ENCODE measurements at regions of chr1 and their contacts with region 1.

Region 1: GRCh38 chr1:205227584-205228006 is at the start of gene TMCC2:
- DNase-seq: peak; percentile 91
- ATAC-seq: peak; percentile 95
- H3K4me3 Mint-ChIP-seq: peak within 1 kb of the TSS; percentile 80
- H3K27ac Mint-ChIP-seq: peak within 1 kb of the TSS; percentile 77
- H3K4me1 Mint-ChIP-seq: peaks cover 45% of the 10 kb centered on the region
- H3K27me3 Mint-ChIP-seq: peaks cover 34% of the 10 kb centered on the region
- total RNA-seq, gene TMCC2: 2.6 to 2.7 TPM

Region 2: GRCh38 chr1:205183676-205184335 is 43.8 kb before region 1 on chr1:
- CTCF ChIA-PET with region 1: interaction called, 14 read pairs
- POLR2A ChIA-PET with region 1: no interaction called
- DNase-seq: peak; percentile 33
- ATAC-seq: peak; percentile 59
- H3K4me3 Mint-ChIP-seq: peak overlapping the region; percentile 32
- H3K27ac Mint-ChIP-seq: peak overlapping the region; percentile 77
- H3K4me1 Mint-ChIP-seq: peaks cover 62% of the 10 kb centered on the region
- H3K27me3 Mint-ChIP-seq: no peaks in the 10 kb centered on the region

Region 3: DNA sequence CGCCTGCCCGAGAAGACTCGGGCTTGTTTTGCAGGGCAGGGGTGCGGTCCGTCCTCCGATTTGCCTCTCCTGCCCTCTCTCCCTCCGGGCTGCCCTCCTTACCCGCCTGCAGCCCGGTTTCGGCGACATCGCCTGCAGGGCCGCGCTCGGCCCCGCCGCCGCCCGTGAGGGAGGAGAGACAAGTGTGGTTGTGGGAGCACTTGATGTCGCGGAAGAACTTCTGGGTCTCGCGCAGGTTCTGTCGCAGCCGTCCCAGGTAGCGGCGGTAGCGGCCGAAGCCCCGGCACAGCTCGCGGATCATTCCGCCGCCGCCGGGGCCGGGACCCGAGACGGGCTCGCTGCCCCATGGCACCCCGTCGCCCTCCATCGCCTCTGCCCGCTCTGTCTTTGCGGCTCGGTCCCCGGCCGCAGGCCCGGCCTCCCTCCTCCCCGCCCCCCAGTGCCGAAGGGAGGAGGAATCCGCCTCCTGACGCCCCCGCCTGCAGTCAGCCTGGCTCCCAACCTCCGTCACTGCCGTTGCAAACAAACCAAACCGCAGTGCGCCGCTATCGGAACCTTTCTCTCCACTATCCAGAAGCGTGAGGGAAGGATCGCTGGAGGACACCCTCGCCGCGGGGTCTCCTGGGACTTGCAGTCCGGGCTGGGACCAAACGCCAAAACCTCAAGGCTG is 16.3 kb before region 1 on chr1 and contains the start of gene DSTYK:
- CTCF ChIA-PET with region 1: interaction called, 15 read pairs
- POLR2A ChIA-PET with region 1: interaction called, 7 read pairs
- DNase-seq: peak; percentile 94
- ATAC-seq: peak; percentile 90
- H3K4me3 Mint-ChIP-seq: peak within 1 kb of the TSS; percentile 95
- H3K27ac Mint-ChIP-seq: peak within 1 kb of the TSS; percentile 93
- H3K4me1 Mint-ChIP-seq: peaks cover 49% of the 10 kb centered on the region
- H3K27me3 Mint-ChIP-seq: no peaks in the 10 kb centered on the region
- total RNA-seq, gene DSTYK: 9.7 to 10.4 TPM

Region 4: DNA sequence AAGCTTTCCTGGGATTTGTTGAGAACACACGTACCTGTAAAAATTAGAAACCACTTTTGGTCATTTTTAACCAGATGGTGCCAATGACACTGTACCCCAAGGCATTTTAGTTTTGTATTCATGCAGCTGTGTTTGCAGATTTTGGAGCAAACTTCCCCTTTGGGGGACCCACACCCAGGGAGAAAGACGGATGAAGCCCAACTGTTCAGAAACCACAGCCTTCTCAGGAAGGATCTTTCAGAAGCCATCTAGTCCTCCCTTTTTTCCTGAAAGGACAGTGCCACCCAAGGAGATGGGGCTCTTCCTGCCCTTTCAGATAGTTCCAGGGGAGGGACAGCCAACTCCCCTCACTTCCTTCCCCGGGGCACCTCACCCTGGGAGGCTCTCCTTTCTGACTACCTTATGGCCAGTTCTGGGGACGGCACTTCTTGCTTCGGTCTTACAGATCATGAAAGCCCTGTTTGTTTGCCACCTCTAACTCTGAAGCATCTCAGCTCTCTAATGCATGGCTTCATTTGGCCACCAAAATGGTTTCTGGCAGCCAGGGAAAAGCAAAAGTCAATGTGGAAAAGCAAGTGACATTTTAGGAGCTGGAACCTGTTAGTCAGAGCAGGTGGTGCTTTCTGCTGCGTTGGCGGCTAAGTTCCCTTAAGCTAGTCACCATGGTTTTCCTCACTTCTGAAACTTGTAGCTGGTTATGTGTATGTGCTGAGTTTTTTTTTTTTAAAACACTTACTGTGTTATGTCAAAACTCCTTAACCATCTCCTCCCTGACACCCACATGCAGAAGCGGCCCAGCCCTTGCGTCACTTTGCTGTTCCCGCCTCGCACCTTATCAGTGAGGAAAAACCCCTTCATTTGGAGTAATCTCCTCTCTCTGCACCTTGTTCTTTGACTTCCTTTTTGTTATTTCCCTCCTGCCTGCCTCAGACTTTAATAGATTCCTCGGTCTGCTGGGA is 10.2 kb after region 1 on chr1:
- CTCF ChIA-PET with region 1: interaction called, 42 read pairs
- POLR2A ChIA-PET with region 1: no interaction called
- DNase-seq: no peak
- ATAC-seq: no peak
- H3K4me3 Mint-ChIP-seq: no peak overlapping the region
- H3K27ac Mint-ChIP-seq: no peak overlapping the region
- H3K4me1 Mint-ChIP-seq: peaks cover 16% of the 10 kb centered on the region
- H3K27me3 Mint-ChIP-seq: peaks cover 2% of the 10 kb centered on the region

Region 5: GRCh38 chr1:205321164-205321958 is 93.8 kb after region 1 on chr1 and contains the start of gene NUAK2:
- CTCF ChIA-PET with region 1: interaction called, 19 read pairs
- POLR2A ChIA-PET with region 1: no interaction called
- DNase-seq: peak; percentile 69
- ATAC-seq: peak; percentile 79
- H3K4me3 Mint-ChIP-seq: peak within 1 kb of the TSS; percentile 87
- H3K27ac Mint-ChIP-seq: peak within 1 kb of the TSS; percentile 56
- H3K4me1 Mint-ChIP-seq: peaks cover 52% of the 10 kb centered on the region
- H3K27me3 Mint-ChIP-seq: peaks cover 36% of the 10 kb centered on the region
- total RNA-seq, gene NUAK2: 1.6 TPM

Measured in activated CD8-positive, alpha-beta T cell treated with anti-CD3 and anti-CD28 coated beads, Interleukin-2, amount 10 ng/mL, durations not matched to agents 7 days and 5 days (primary cell).